PC-9 (cell line): ENCODE measurements at regions of chr2 and their contacts with region 1.

Region 1: GRCh38 chr2:100882645-100883613 is 63.0 kb downstream of the NPAS2 start:
- DNase-seq: peak; percentile 84 to 98
- H3K4me3 ChIP-seq: no peak overlapping the region
- H3K27ac ChIP-seq: peak overlapping the region; percentile 80
- H3K4me1 ChIP-seq: peaks cover 75% of the 10 kb centered on the region
- H3K27me3 ChIP-seq: no peaks in the 10 kb centered on the region
- CTCF ChIP-seq: no peak

Region 2: GRCh38 chr2:100675855-100676254 is 207.1 kb before region 1 on chr2:
- CTCF ChIA-PET with region 1: no interaction called
- POLR2A ChIA-PET with region 1: no interaction called
- intact Hi-C with region 1: no loop called
- DNase-seq: no peak
- H3K4me3 ChIP-seq: no peak overlapping the region
- H3K27ac ChIP-seq: no peak overlapping the region
- H3K4me1 ChIP-seq: no peaks in the 10 kb centered on the region
- H3K27me3 ChIP-seq: no peaks in the 10 kb centered on the region
- CTCF ChIP-seq: no peak

Region 3: DNA sequence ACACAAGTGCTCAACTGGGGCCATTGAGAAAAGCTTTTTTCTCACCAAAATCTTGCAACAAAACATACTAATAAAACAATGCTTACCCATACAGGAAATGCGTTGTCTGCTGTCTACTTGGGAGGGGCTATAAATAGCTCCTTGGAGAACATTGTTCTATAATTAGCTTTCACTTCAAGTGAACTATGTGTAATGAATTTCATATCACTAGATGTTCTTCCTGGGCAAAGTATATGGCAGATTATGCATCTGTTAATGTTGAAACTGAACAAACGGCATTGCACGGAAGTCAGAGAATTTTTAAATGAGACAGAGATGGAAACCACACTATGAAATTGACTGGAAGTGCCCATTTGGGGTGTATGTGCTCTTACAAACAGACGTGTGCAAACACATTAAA is 69.4 kb before region 1 on chr2:
- CTCF ChIA-PET with region 1: no interaction called
- POLR2A ChIA-PET with region 1: no interaction called
- intact Hi-C with region 1: no loop called
- DNase-seq: no peak
- H3K4me3 ChIP-seq: no peak overlapping the region
- H3K27ac ChIP-seq: no peak overlapping the region
- H3K4me1 ChIP-seq: peaks cover 17% of the 10 kb centered on the region
- H3K27me3 ChIP-seq: no peaks in the 10 kb centered on the region
- CTCF ChIP-seq: no peak

Region 4: GRCh38 chr2:100857915-100858314 is 25.0 kb before region 1 on chr2:
- CTCF ChIA-PET with region 1: interaction called, 10 read pairs
- POLR2A ChIA-PET with region 1: no interaction called
- intact Hi-C with region 1: loop called (anchors 1 kb)
- DNase-seq: peak in 1 of 2 experiments; percentile 76
- H3K4me3 ChIP-seq: no peak overlapping the region
- H3K27ac ChIP-seq: peak overlapping the region; percentile 97
- H3K4me1 ChIP-seq: peaks cover 78% of the 10 kb centered on the region
- H3K27me3 ChIP-seq: no peaks in the 10 kb centered on the region
- CTCF ChIP-seq: no peak

Region 5: DNA sequence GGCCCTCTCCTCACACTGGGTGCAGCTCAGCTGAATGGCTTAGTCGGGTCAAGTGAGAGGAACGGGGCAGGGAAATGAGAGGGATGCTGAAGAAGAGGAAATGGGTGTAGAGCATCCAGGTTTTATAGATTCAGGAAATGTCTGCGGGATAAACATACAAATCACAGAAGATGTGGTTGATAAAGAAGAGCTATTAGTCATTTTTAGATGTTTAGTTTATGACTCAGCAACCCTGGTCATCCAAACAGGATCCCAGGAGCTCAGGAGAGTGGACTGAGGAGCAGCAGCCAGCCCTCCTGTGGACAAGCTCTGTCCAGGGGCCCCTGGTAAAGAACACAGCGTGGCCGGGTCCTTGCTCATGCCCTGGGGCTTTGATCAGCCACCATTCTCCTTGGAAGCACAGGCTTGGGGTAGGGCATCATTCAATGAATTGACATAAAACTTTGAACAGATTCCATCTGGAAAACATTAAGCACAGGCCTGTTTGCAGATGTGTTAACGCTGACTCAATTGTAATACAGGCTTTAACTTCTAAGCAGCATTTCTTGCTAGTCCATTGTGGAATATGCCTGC is 20.0 kb after region 1 on chr2:
- CTCF ChIA-PET with region 1: no interaction called
- POLR2A ChIA-PET with region 1: interaction called, 4 read pairs
- intact Hi-C with region 1: loop called (anchors 1 kb)
- DNase-seq: peak; percentile 85 to 97
- H3K4me3 ChIP-seq: no peak overlapping the region; the same call in 1 of the 2 replicates
- H3K27ac ChIP-seq: peak overlapping the region; percentile 93
- H3K4me1 ChIP-seq: peaks cover 60% of the 10 kb centered on the region
- H3K27me3 ChIP-seq: no peaks in the 10 kb centered on the region
- CTCF ChIP-seq: no peak

Region 6: GRCh38 chr2:100984892-100985379 is 102.0 kb after region 1 on chr2:
- CTCF ChIA-PET with region 1: no interaction called
- POLR2A ChIA-PET with region 1: no interaction called
- intact Hi-C with region 1: loop called (anchors 10 kb)
- DNase-seq: peak; percentile 50 to 63
- H3K4me3 ChIP-seq: no peak overlapping the region
- H3K27ac ChIP-seq: no peak overlapping the region
- H3K4me1 ChIP-seq: no peaks in the 10 kb centered on the region
- H3K27me3 ChIP-seq: no peaks in the 10 kb centered on the region
- CTCF ChIP-seq: peak; percentile 94

Region 7: DNA sequence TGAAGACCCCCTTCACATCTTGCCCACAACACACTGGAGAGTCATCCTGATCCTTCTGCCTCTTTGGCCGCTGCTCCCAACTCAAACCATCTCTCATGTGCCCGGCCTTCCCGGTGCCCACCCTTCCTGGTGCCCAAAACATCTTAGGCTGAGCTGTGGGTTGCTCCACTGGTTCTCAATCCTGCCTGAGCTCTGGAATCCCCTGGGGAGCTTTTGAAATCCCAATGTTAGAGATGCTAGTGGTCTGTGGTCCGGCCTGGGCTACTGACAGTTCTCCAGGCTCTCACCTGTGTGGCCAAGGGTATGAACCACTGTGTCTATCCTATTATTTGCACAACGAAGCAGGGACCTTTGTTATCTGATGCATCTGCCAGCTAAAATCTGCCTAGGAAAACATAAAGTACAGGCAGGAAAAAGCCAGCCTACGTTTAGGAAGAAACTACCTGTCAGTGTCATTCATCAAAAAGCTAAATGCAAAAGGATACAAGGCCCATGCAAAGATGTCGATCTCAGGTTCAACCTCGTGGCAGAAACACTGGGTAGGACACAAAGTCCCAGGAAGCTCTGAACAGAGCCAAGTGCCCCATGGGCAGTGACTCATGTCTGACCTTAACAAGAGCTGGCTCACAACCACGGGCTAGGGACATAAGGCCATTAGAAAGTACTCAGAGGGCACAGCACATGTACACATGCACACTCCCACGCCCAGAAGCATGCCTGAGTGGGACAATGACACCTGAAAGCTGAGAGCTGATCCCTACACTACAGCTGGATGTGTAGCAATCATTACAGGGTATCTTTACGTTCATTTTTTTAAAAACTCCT is 237.5 kb after region 1 on chr2:
- CTCF ChIA-PET with region 1: no interaction called
- POLR2A ChIA-PET with region 1: no interaction called
- intact Hi-C with region 1: loop called (anchors 1 kb)
- DNase-seq: peak; percentile 79 to 98
- H3K4me3 ChIP-seq: no peak overlapping the region
- H3K27ac ChIP-seq: peak overlapping the region; percentile 84
- H3K4me1 ChIP-seq: peaks cover 90% of the 10 kb centered on the region
- H3K27me3 ChIP-seq: no peaks in the 10 kb centered on the region
- CTCF ChIP-seq: no peak

Region 8: DNA sequence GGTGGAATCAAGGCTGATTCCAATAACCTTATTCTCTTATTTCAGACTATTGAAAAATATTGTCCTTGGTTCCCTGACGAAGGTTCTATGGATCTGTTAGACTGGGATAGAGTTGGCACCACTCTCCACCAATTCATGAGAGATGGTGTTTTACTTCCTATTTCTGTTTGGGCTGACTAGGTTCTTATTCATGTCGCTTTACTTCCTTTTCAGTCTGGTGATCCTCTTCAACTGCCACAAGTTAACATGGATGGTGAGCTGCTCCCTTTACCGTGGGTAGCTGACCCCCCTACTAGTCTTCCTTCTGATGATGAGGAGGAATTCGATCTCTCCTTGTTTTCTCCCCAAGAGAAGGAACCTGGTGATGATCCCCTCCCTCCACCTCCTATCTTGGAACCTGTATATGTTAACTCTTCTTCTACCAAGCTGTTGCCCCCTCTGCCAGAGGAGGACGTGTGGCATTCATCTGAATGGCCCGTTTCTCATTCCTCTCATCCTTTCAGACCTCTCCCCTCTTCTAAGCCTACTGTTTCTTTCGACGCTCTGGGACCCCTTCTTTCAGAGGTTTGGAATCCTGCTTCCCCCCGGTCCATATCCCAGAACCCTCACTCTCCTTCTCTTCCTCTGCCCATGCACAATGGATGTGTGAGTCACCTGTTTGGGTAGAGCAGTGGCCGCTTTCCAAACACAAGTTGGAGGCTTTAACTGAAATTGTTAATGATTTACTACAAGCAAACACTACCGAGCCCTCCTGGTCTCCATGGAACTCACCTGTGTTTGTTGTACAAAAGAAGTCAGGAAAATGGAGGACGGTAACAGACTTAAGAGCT is 356.2 kb after region 1 on chr2:
- CTCF ChIA-PET with region 1: no interaction called
- POLR2A ChIA-PET with region 1: no interaction called
- intact Hi-C with region 1: no loop called
- DNase-seq: no peak
- H3K4me3 ChIP-seq: no peak overlapping the region
- H3K27ac ChIP-seq: no peak overlapping the region
- H3K4me1 ChIP-seq: peaks cover 11% of the 10 kb centered on the region
- H3K27me3 ChIP-seq: no peaks in the 10 kb centered on the region
- CTCF ChIP-seq: no peak